B cell (primary cell): ENCODE measurements at regions of chr15 and their contacts with region 1.

Region 1: DNA sequence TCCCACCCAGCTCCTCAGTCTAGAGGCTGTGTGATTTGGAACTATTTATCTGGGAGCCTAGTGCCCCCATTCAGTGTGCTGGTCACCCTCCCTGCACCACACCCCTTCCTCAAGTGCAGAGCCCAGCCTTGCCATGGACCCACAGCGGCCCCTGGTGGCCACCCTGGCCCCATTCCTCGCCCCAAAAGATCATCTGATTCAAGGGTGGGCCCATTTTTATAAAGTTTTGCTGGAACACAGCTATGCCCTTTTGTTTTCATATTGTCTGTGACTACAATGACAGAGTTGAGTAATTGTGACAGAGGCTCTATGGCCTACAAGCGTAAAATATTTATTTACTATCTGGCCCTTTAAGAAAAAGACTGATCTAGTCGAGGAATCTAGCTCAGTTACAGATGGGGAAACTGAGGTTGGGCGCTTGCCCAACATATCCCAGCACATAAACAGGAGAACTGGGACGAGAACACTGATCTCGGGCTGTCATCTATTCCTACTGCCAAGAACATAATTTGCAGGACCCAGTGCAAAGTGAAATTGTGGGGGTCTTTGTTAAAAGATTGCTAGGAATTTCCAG is 1.8 kb downstream of the FES start:
- DNase-seq: peak; percentile 87
- ATAC-seq: peak; percentile 67
- H3K4me3 ChIP-seq: peak overlapping the region in 3 of 5 experiments; percentile 16 to 61 (median 51)
- H3K4me3 Mint-ChIP-seq: peak overlapping the region; percentile 80
- H3K27ac ChIP-seq: no peak overlapping the region
- H3K27ac Mint-ChIP-seq: peak overlapping the region; percentile 88
- H3K4me1 ChIP-seq: peaks cover 25 to 32% of the 10 kb centered on the region in 2 donors
- H3K4me1 Mint-ChIP-seq: peaks cover 22% of the 10 kb centered on the region
- H3K27me3 ChIP-seq: no peaks in the 10 kb centered on the region
- H3K27me3 Mint-ChIP-seq: no peaks in the 10 kb centered on the region
- CTCF ChIP-seq: peak; percentile 99

Region 2: DNA sequence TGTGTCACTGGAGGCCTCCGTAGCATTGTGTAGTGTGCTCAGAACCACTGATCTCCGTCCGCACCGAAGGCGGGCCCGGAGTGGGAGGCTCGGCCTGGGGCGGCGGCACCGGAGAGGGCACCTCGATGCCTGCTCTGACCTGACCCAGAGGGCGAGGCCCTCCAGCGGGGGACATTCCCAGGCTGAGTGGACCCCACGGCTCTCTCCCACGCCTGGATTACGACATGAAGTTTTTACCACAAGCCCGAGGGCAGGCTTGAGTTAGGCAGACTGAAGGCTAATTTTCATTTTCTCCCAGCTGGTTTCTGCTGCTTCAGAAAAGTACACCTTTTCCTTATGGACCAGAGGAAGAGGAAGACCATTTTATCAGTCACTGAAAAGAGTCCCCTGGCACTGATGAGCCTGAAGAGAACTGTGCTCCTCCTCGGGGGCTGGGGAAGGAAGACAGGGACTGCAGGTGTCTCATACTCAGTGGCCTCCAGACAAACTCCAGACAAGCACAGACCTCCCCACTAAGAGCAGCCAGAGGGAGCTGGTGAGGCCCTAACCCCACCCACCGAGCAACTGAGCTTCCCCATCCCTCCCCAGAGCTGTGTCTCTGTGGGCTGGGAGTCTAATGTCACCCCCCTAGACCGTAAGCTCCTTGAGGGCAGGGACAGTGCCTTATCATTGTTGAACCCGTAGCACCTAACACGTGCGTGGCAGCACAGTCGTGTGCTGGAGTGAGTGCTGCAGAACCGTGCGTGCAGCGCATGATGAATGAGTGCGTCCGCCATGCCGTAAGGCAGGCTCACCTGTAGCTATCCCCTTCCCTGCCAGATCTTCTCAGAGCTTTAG is 243.4 kb before region 1 on chr15:
- CTCF ChIA-PET with region 1: interaction called, 158 read pairs
- POLR2A ChIA-PET with region 1: interaction called, 3 read pairs
- intact Hi-C with region 1: no loop called
- DNase-seq: no peak
- ATAC-seq: no peak
- H3K4me3 ChIP-seq: no peak overlapping the region
- H3K4me3 Mint-ChIP-seq: no peak overlapping the region
- H3K27ac ChIP-seq: no peak overlapping the region
- H3K27ac Mint-ChIP-seq: no peak overlapping the region
- H3K4me1 ChIP-seq: no peaks in the 10 kb centered on the region
- H3K4me1 Mint-ChIP-seq: no peaks in the 10 kb centered on the region
- H3K27me3 ChIP-seq: no peaks in the 10 kb centered on the region
- H3K27me3 Mint-ChIP-seq: no peaks in the 10 kb centered on the region
- CTCF ChIP-seq: no peak

Region 3: GRCh38 chr15:90691982-90692773 is 193.9 kb before region 1 on chr15:
- CTCF ChIA-PET with region 1: interaction called, 23 read pairs
- POLR2A ChIA-PET with region 1: no interaction called
- intact Hi-C with region 1: loop called (anchors 1 kb)
- DNase-seq: no peak
- ATAC-seq: no peak
- H3K4me3 ChIP-seq: no peak overlapping the region
- H3K4me3 Mint-ChIP-seq: no peak overlapping the region
- H3K27ac ChIP-seq: no peak overlapping the region
- H3K27ac Mint-ChIP-seq: peak overlapping the region; percentile 7
- H3K4me1 ChIP-seq: no peaks in the 10 kb centered on the region
- H3K4me1 Mint-ChIP-seq: no peaks in the 10 kb centered on the region
- H3K27me3 ChIP-seq: no peaks in the 10 kb centered on the region
- H3K27me3 Mint-ChIP-seq: no peaks in the 10 kb centered on the region
- CTCF ChIP-seq: no peak

Region 4: DNA sequence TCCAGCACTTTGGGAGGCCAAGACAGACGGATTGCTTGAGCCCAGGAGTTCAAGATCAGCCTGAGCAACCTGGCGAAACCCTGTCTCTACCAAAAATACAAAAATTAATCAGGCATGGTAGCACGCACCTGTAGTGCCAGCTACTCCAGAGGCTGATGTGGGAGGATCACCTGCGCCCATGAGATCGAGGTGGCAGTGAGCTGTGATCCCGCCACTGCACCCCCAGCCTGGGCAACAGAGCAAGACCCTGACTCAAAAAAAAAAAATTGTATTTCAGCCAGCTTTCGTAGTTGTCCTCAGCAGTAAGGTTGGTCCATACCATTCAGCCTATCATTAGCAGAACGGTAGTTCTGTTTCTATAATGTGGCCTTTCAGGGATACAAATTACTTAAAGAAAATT is 84.3 kb before region 1 on chr15:
- CTCF ChIA-PET with region 1: interaction called, 51 read pairs
- POLR2A ChIA-PET with region 1: no interaction called
- intact Hi-C with region 1: no loop called
- DNase-seq: no peak
- ATAC-seq: no peak
- H3K4me3 ChIP-seq: no peak overlapping the region
- H3K4me3 Mint-ChIP-seq: no peak overlapping the region
- H3K27ac ChIP-seq: no peak overlapping the region
- H3K27ac Mint-ChIP-seq: no peak overlapping the region
- H3K4me1 ChIP-seq: no peaks in the 10 kb centered on the region
- H3K4me1 Mint-ChIP-seq: peaks cover 9% of the 10 kb centered on the region
- H3K27me3 ChIP-seq: no peaks in the 10 kb centered on the region
- H3K27me3 Mint-ChIP-seq: no peaks in the 10 kb centered on the region
- CTCF ChIP-seq: no peak

Region 5: GRCh38 chr15:90839187-90840071 is 46.7 kb before region 1 on chr15:
- CTCF ChIA-PET with region 1: interaction called, 28 read pairs
- POLR2A ChIA-PET with region 1: interaction called, 5 read pairs
- intact Hi-C with region 1: loop called (anchors 5 kb)
- DNase-seq: peak; percentile 74
- ATAC-seq: peak; percentile 54
- H3K4me3 ChIP-seq: peak overlapping the region in 3 of 5 experiments; percentile 52 to 74 (median 63)
- H3K4me3 Mint-ChIP-seq: peak overlapping the region; percentile 66
- H3K27ac ChIP-seq: peak overlapping the region in 1 of 2 donors; percentile 67
- H3K27ac Mint-ChIP-seq: peak overlapping the region; percentile 61
- H3K4me1 ChIP-seq: peaks cover 33 to 46% of the 10 kb centered on the region in 2 donors
- H3K4me1 Mint-ChIP-seq: peaks cover 38% of the 10 kb centered on the region
- H3K27me3 ChIP-seq: no peaks in the 10 kb centered on the region
- H3K27me3 Mint-ChIP-seq: no peaks in the 10 kb centered on the region
- CTCF ChIP-seq: no peak

Region 6: DNA sequence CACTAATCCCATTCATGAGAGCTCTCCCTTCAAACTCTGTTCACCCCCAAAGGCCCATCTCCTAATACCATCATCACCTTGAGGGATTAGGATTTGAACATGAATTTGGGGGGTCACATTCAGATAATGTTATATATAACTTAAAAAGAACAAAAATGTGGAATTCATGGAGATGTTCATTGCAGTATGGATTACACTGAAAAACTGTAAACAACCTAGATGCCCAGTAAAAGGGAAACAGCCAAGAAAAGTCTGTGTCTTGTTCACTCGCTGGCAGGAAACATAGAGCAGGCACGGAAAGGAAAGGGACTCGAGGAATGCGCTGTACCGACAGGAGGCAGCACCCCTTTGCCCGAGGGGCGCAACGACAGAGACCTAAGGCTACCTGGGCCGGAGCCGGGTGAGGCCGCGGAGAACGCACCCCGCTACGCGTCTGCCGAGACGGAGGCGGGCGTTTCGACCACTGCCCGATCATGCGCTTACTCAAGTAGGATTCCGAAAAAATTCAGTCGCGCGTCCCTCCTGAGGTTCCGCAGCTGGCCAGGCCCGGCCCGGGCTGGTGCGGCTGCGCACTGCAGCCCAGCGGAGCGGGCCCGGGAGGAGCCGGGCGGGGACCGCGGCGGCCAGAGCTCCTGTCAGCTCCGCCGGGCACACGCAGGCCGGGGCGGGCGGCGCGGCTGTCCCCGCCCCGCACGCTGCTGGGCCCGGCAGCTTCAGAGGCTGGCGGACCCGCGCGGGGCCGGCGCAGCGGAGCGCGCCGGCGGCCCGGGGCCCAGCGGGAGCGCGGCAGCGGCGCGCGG is 16.1 kb after region 1 on chr15:
- CTCF ChIA-PET with region 1: interaction called, 45 read pairs
- POLR2A ChIA-PET with region 1: interaction called, 5 read pairs
- intact Hi-C with region 1: no loop called
- DNase-seq: peak; percentile 89
- ATAC-seq: peak; percentile 75
- H3K4me3 ChIP-seq: peak overlapping the region; percentile 49 to 74 (median 69)
- H3K4me3 Mint-ChIP-seq: peak overlapping the region; percentile 85
- H3K27ac ChIP-seq: peak overlapping the region; percentile 52 to 66
- H3K27ac Mint-ChIP-seq: peak overlapping the region; percentile 97
- H3K4me1 ChIP-seq: peaks cover 20 to 28% of the 10 kb centered on the region in 2 donors
- H3K4me1 Mint-ChIP-seq: peaks cover 30% of the 10 kb centered on the region
- H3K27me3 ChIP-seq: no peaks in the 10 kb centered on the region
- H3K27me3 Mint-ChIP-seq: no peaks in the 10 kb centered on the region
- CTCF ChIP-seq: peak; percentile 80